ENCODE measurements at regions of chrX and their contacts with region 1.

Region 1: DNA sequence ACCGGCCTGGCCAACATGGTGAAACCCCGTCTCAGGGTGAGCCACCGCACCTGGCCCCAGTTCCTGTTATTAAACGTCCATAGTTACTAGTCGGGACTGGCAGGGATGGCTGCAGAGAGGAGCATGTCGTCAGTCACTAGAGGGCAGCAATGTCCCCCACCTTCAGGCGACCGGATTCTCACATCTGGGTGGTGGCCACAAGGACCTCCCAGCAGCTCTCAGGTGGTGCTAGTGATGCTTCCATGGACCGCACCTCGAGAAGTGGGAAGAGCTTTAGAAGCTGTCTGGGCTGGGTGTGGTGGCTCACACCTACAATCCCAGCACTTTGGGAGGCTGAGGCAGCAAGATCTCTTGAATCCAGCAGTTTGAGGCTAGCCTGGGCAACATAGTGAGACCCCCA is 13.3 kb upstream of the IL3RA start:
- DNase-seq: peak; percentile 72
- H3K4me3 ChIP-seq: no peak overlapping the region
- H3K27ac ChIP-seq: no peak overlapping the region
- H3K4me1 ChIP-seq: no peaks in the 10 kb centered on the region
- H3K27me3 ChIP-seq: no peaks in the 10 kb centered on the region
- CTCF ChIP-seq: peak; percentile 40 to 72
- POLR2A ChIP-seq: no peak

Region 2: GRCh38 chrX:1026263-1027015 is 296.9 kb before region 1 on chrX:
- CTCF ChIA-PET with region 1: no interaction called
- POLR2A ChIA-PET with region 1: no interaction called
- dilution Hi-C with region 1: no loop called
- intact Hi-C with region 1: no loop called
- DNase-seq: no peak
- H3K4me3 ChIP-seq: no peak overlapping the region
- H3K27ac ChIP-seq: no peak overlapping the region
- H3K4me1 ChIP-seq: no peaks in the 10 kb centered on the region
- H3K27me3 ChIP-seq: no peaks in the 10 kb centered on the region
- CTCF ChIP-seq: no peak
- POLR2A ChIP-seq: no peak

Region 3: DNA sequence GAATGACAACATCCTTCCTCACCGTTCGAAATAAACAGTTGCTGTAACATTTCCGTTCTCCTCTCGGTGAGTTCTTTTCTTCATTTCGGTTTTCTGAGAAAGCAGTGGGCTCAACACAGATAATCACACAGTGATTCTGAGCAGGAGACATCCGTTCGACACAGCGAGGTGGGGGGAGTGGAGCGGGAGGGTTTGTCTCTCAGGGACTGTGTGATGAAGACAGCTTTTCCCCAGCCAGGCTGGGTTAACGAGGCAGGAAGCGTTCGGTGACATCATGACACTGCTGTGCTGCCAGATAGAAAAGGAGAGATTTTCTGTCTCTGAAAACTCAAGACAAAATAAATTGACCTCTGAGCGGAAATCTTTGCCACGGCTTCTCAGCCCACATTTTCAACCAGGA is 230.2 kb before region 1 on chrX:
- CTCF ChIA-PET with region 1: no interaction called
- POLR2A ChIA-PET with region 1: no interaction called
- dilution Hi-C with region 1: no loop called
- intact Hi-C with region 1: no loop called
- DNase-seq: no peak
- H3K4me3 ChIP-seq: no peak overlapping the region
- H3K27ac ChIP-seq: no peak overlapping the region
- H3K4me1 ChIP-seq: no peaks in the 10 kb centered on the region
- H3K27me3 ChIP-seq: no peaks in the 10 kb centered on the region
- CTCF ChIP-seq: no peak
- POLR2A ChIP-seq: no peak

Region 4: GRCh38 chrX:1246816-1247215 is 76.5 kb before region 1 on chrX:
- CTCF ChIA-PET with region 1: no interaction called
- POLR2A ChIA-PET with region 1: no interaction called
- dilution Hi-C with region 1: no loop called
- intact Hi-C with region 1: loop called (anchors 5 kb)
- DNase-seq: peak; percentile 63
- H3K4me3 ChIP-seq: no peak overlapping the region
- H3K27ac ChIP-seq: no peak overlapping the region
- H3K4me1 ChIP-seq: no peaks in the 10 kb centered on the region
- H3K27me3 ChIP-seq: peaks cover 2% of the 10 kb centered on the region in 2 experiments
- CTCF ChIP-seq: peak; percentile 72 to 74
- POLR2A ChIP-seq: no peak

Region 5: GRCh38 chrX:1355131-1356046 is 32.1 kb after region 1 on chrX:
- CTCF ChIA-PET with region 1: no interaction called
- POLR2A ChIA-PET with region 1: no interaction called
- dilution Hi-C with region 1: no loop called
- intact Hi-C with region 1: loop called (anchors 2 kb)
- DNase-seq: no peak
- H3K4me3 ChIP-seq: no peak overlapping the region
- H3K27ac ChIP-seq: no peak overlapping the region
- H3K4me1 ChIP-seq: no peaks in the 10 kb centered on the region
- H3K27me3 ChIP-seq: no peaks in the 10 kb centered on the region
- CTCF ChIP-seq: no peak
- POLR2A ChIP-seq: no peak

Region 6: DNA sequence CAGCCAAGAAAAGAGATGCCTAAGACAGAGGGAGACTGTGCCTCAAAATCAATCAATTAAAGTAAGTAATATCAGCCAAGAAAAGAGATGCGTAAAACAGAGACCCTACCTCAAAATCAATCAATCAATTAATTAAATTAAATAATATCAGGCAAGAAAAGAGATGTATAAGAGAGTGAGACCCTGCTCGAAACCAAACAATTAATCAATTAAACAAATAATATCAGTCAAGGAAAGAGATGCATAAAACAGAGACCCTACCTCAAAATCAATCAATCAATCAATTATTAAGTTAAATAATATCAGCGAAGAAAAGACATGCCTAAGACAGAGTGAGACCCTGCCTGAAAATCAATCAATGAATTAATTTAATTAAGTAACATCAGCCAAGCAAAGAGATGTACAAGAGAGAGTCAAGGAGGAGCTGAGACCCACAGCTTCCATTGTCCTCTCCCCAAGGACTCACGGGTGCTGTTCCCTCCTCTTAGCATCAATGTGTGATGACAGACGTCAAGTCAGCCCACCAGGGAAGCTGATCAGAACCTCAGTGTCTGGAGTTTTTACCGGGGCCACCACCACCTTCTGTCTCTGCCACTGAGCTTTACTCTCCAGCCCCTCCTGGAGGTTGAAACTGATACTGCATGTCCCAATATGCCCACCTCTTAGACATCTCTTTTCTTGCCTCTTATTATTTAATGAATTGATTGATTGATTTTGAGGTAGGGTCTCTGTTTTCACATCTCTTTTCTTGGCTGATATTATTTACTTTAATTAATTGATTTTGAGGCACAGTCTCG is 257.6 kb after region 1 on chrX:
- CTCF ChIA-PET with region 1: no interaction called
- POLR2A ChIA-PET with region 1: no interaction called
- dilution Hi-C with region 1: no loop called
- intact Hi-C with region 1: loop called (anchors 2 kb)
- DNase-seq: peak; percentile 64
- H3K4me3 ChIP-seq: no peak overlapping the region
- H3K27ac ChIP-seq: no peak overlapping the region
- H3K4me1 ChIP-seq: no peaks in the 10 kb centered on the region
- H3K27me3 ChIP-seq: no peaks in the 10 kb centered on the region
- CTCF ChIP-seq: peak; percentile 69 to 83
- POLR2A ChIP-seq: no peak

Measured in endothelial cell of umbilical vein (primary cell).